ENCODE measurements at regions of chr15 and their contacts with region 1.

Region 1: GRCh38 chr15:25208735-25209134 is 230.1 kb downstream of the UBE3A start:
- DNase-seq: no peak
- ATAC-seq: no peak
- H3K4me3 ChIP-seq: no peak overlapping the region
- H3K27ac ChIP-seq: no peak overlapping the region
- H3K4me1 ChIP-seq: no peaks in the 10 kb centered on the region
- H3K27me3 ChIP-seq: no peaks in the 10 kb centered on the region
- CTCF ChIP-seq: no peak

Region 2: DNA sequence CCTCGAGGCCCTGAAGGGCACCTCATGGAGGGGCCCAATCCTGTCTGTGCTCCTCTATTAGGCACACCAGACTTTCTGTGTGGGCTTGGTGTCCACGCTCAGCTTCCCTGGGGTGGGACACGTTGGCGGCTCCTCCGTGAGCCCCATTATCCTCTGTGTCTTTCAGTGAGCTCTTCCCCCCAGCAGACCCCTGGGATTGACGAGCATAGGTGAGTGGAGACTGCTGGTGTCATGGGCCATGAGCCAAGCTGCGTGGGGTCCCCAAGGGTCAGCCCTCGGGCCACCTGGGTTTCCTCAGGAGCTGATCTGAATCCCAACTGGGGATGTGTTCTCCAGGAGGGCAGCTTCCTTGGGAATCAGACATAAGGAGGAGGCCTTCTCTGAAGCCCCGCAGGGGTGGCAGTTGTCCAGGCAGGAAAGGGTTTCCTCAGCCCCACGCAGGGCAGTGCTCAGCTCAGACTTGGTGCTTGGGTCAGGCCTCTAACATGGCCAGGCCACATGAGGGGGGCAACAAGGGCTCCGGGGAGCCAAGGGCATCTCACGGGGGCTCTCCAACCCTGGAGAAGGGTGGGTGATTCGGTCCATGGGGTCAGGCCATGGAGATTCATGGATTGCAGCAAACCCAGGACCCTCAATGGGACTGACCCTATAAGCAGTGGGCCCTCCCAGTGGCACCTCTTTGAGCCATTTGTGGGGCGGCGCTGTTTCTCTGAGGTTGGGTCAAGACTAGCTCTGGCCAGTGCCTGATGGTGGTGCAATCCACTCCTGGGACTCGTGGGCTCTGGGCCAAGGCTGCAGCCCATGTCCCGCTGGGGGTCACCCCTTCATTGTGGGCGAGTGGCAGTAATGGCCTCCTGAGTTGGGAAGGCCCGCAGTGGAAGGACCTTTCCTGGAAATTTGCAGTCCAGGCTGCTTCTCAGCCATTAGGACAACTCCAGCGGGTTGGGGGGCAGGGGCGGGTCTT is 31.5 kb before region 1 on chr15:
- intact Hi-C with region 1: loop called in 1 of 3 experiments (anchors 5 kb)
- DNase-seq: peak in 5 of 6 donors; percentile 1 to 46 (median 12)
- ATAC-seq: no peak
- H3K4me3 ChIP-seq: no peak overlapping the region
- H3K27ac ChIP-seq: no peak overlapping the region
- H3K4me1 ChIP-seq: no peaks in the 10 kb centered on the region
- H3K27me3 ChIP-seq: no peaks in the 10 kb centered on the region
- CTCF ChIP-seq: no peak

Measured in pancreas (tissue), 10 donors.